Mucosa of descending colon (tissue), 3 donors: ENCODE measurements at regions of chr2 and their contacts with region 1.

Region 1: DNA sequence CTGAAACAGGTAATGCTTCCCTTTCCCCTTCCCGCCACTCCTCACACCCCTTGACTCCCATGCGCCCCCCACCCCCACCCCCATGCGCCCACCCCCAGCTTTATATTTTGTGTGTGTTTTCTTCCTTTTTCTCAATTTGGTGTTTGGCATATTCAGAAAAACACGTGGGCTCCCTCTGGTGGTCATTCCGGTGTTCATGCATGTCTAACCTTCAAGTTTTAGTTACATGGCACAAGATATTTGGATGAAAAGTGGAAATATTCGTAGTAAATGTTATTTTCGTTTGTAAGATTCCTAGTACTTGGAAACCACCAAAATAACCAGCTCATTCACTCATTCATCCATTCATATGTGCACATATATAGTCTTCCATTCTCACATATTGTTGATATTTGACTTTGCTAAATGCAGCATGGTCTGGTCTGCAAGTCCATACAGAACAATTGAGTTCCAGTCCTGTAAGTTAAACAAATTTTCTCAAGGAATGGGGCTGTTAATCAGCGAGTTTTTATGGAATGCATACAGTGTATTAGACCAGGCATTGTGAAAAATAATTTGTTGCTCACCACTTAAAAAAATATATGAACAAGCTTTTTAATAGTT is 143.6 kb upstream of the MAP3K20 start:
- DNase-seq: peak in 2 of 3 donors; percentile 48 to 88
- ATAC-seq: peak; percentile 40
- H3K4me3 ChIP-seq: no peak overlapping the region
- H3K4me1 ChIP-seq: no peaks in the 10 kb centered on the region
- CTCF ChIP-seq: peak; percentile 43

Region 2: GRCh38 chr2:172806493-172806892 is 125.5 kb before region 1 on chr2:
- intact Hi-C with region 1: loop called (anchors 10 kb)
- DNase-seq: peak in 1 of 3 donors; percentile 14
- ATAC-seq: peak; percentile 67
- H3K4me3 ChIP-seq: no peak overlapping the region
- H3K4me1 ChIP-seq: peaks cover 3% of the 10 kb centered on the region
- CTCF ChIP-seq: peak; percentile 51

Region 3: GRCh38 chr2:172864182-172864581 is 67.8 kb before region 1 on chr2:
- intact Hi-C with region 1: loop called (anchors 2 to 5 kb)
- DNase-seq: peak in 2 of 3 donors; percentile 66 to 72
- ATAC-seq: peak; percentile 54
- H3K4me3 ChIP-seq: no peak overlapping the region
- H3K4me1 ChIP-seq: no peaks in the 10 kb centered on the region
- CTCF ChIP-seq: peak; percentile 42

Region 4: GRCh38 chr2:173008786-173009185 is 76.8 kb after region 1 on chr2:
- intact Hi-C with region 1: no loop called
- DNase-seq: no peak
- ATAC-seq: no peak
- H3K4me3 ChIP-seq: no peak overlapping the region
- H3K4me1 ChIP-seq: no peaks in the 10 kb centered on the region
- CTCF ChIP-seq: no peak